PC-9 (cell line): ENCODE measurements at regions of chr2 and their contacts with region 1.

Region 1: GRCh38 chr2:224442071-224442967 is 40.4 kb upstream of the FAM124B start:
- DNase-seq: peak in 1 of 2 experiments; percentile 54
- H3K4me3 ChIP-seq: peak overlapping the region; percentile 55
- H3K27ac ChIP-seq: no peak overlapping the region
- H3K4me1 ChIP-seq: peaks cover 19% of the 10 kb centered on the region
- H3K27me3 ChIP-seq: no peaks in the 10 kb centered on the region
- CTCF ChIP-seq: no peak

Region 2: GRCh38 chr2:224260372-224261020 is 181.8 kb before region 1 on chr2:
- CTCF ChIA-PET with region 1: no interaction called
- POLR2A ChIA-PET with region 1: no interaction called
- intact Hi-C with region 1: no loop called
- DNase-seq: no peak
- H3K4me3 ChIP-seq: no peak overlapping the region
- H3K27ac ChIP-seq: no peak overlapping the region
- H3K4me1 ChIP-seq: peaks cover 23% of the 10 kb centered on the region
- H3K27me3 ChIP-seq: no peaks in the 10 kb centered on the region
- CTCF ChIP-seq: no peak

Region 3: DNA sequence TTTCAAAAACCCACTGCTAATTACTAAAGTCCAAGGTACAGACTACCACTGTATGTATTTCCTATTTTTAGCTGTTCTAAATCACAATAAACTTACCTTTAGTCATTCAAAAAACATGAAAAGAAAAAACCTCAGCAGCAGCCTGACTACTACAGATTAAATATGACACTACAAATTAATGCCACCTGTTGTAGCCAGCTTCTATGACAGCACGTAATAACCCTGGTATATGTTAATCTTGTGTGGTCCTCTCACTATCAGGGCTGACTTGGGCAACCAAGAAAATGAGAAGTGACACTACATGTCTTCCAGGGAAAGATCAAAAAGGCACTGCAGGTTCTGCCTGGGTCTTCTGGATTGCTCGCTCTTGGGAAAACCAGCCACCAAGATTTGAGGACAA is 50.2 kb after region 1 on chr2:
- CTCF ChIA-PET with region 1: no interaction called
- POLR2A ChIA-PET with region 1: no interaction called
- intact Hi-C with region 1: no loop called
- DNase-seq: no peak
- H3K4me3 ChIP-seq: no peak overlapping the region
- H3K27ac ChIP-seq: no peak overlapping the region
- H3K4me1 ChIP-seq: 0 out of 2 replicates have a peak, but pooled peaks cover 8% of the 10 kb centered on the region
- H3K27me3 ChIP-seq: no peaks in the 10 kb centered on the region
- CTCF ChIP-seq: no peak

Region 4: DNA sequence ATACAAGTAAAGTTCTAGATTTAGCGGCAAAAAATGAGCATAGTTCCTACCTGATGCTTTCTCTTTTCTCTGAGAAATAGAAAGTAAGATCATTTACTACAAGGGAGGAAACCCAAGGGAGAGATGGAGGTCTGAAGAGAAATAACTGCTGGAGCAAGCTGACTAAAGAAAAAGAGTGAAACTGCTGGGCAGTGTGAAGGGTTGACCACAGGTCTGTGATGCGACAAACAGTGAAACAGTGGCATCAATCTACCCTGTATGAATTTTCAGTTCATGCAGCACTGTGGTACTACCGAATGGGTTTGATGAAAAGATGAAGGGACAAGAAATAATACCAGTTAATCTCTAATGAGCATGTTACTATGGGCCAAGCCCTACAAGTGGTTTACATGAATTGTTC is 90.6 kb after region 1 on chr2:
- CTCF ChIA-PET with region 1: no interaction called
- POLR2A ChIA-PET with region 1: no interaction called
- intact Hi-C with region 1: no loop called
- DNase-seq: no peak
- H3K4me3 ChIP-seq: no peak overlapping the region
- H3K27ac ChIP-seq: no peak overlapping the region; the same call in 1 of the 2 replicates
- H3K4me1 ChIP-seq: no peaks in the 10 kb centered on the region
- H3K27me3 ChIP-seq: no peaks in the 10 kb centered on the region
- CTCF ChIP-seq: no peak

Region 5: GRCh38 chr2:224709301-224709700 is 267.0 kb after region 1 on chr2:
- CTCF ChIA-PET with region 1: interaction called, 12 read pairs
- POLR2A ChIA-PET with region 1: no interaction called
- intact Hi-C with region 1: no loop called
- DNase-seq: no peak
- H3K4me3 ChIP-seq: no peak overlapping the region
- H3K27ac ChIP-seq: no peak overlapping the region
- H3K4me1 ChIP-seq: no peaks in the 10 kb centered on the region
- H3K27me3 ChIP-seq: no peaks in the 10 kb centered on the region
- CTCF ChIP-seq: no peak

Region 6: GRCh38 chr2:225002039-225002655 is 559.8 kb after region 1 on chr2:
- CTCF ChIA-PET with region 1: no interaction called
- POLR2A ChIA-PET with region 1: no interaction called
- intact Hi-C with region 1: no loop called
- DNase-seq: peak in 1 of 2 experiments; percentile 48
- H3K4me3 ChIP-seq: no peak overlapping the region
- H3K27ac ChIP-seq: no peak overlapping the region
- H3K4me1 ChIP-seq: no peaks in the 10 kb centered on the region
- H3K27me3 ChIP-seq: 0 out of 2 replicates have a peak, but pooled peaks cover 3% of the 10 kb centered on the region
- CTCF ChIP-seq: peak; percentile 93